ENCODE measurements at regions of chr18 and their contacts with region 1.

Region 1: DNA sequence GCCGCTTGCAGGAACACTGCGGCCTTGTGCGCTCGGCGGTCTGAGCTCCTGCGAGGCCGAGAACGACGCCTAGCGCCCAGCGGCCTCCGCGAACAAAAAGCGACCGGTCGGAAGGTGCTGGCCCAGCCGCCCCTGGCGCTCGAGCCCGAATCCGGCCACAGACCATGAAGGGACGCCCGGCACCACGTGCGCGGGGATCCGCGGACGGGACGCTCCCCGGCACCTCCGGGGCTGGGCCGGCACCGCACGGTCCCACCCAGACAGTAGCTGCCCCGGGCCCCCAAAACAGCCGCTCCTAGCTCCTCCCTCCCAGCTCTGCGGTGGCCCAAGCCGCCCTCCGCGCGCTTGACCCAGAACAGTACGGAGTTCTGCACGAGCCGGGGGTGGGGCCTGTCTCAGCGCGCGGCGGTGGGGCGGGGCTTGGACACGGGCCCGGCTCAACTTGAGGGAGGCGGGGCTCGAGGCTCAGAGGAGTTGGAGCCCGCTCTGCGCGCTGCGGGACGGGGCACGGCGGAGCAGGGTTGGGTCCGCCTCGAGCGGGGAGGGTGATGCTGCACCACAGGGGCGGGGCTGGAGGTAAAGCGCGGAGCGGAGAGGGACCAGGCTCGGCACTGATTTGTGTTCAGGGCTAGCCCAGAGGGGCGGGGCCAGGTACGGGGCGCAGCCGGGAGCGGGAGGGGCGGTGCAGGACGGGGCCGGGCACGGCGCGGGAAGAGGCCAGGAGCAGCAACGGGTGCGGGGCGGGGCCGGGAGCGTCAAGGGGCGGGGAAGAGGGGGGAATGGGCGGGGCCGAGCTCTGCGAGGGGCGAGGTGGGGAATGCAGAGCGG is 538 bp upstream of the IMPA2 start:
- DNase-seq: peak; percentile 99
- ATAC-seq: peak; percentile 95
- H3K4me3 Mint-ChIP-seq: peak overlapping the region; percentile 91
- H3K27ac Mint-ChIP-seq: peak overlapping the region; percentile 82
- H3K4me1 Mint-ChIP-seq: peaks cover 16% of the 10 kb centered on the region
- H3K27me3 Mint-ChIP-seq: peaks cover 4% of the 10 kb centered on the region

Region 2: GRCh38 chr18:11851146-11851805 is 129.5 kb before region 1 on chr18 and contains the start of gene CHMP1B:
- CTCF ChIA-PET with region 1: interaction called, 3 read pairs
- POLR2A ChIA-PET with region 1: interaction called, 3 read pairs
- intact Hi-C with region 1: loop called (anchors 1 kb)
- DNase-seq: peak; percentile 98
- ATAC-seq: peak; percentile 92
- H3K4me3 Mint-ChIP-seq: peak within 1 kb of the TSS; percentile 91
- H3K27ac Mint-ChIP-seq: peak within 1 kb of the TSS; percentile 99
- H3K4me1 Mint-ChIP-seq: peaks cover 25% of the 10 kb centered on the region
- H3K27me3 Mint-ChIP-seq: no peaks in the 10 kb centered on the region
- total RNA-seq, gene CHMP1B: 20.4 to 20.9 TPM

Region 3: GRCh38 chr18:11937874-11938478 is 42.8 kb before region 1 on chr18:
- CTCF ChIA-PET with region 1: interaction called, 33 read pairs
- POLR2A ChIA-PET with region 1: no interaction called
- intact Hi-C with region 1: no loop called
- DNase-seq: peak; percentile 86
- ATAC-seq: peak; percentile 51
- H3K4me3 Mint-ChIP-seq: no peak overlapping the region
- H3K27ac Mint-ChIP-seq: no peak overlapping the region
- H3K4me1 Mint-ChIP-seq: no peaks in the 10 kb centered on the region
- H3K27me3 Mint-ChIP-seq: no peaks in the 10 kb centered on the region

Region 4: GRCh38 chr18:11995445-11996189 is 14.8 kb after region 1 on chr18:
- CTCF ChIA-PET with region 1: interaction called, 25 read pairs
- POLR2A ChIA-PET with region 1: interaction called, 7 read pairs
- intact Hi-C with region 1: no loop called
- DNase-seq: peak; percentile 75
- ATAC-seq: peak; percentile 97
- H3K4me3 Mint-ChIP-seq: no peak overlapping the region
- H3K27ac Mint-ChIP-seq: no peak overlapping the region
- H3K4me1 Mint-ChIP-seq: peaks cover 7% of the 10 kb centered on the region
- H3K27me3 Mint-ChIP-seq: no peaks in the 10 kb centered on the region

Region 5: GRCh38 chr18:12657684-12658425 is 677.1 kb after region 1 on chr18 and contains the start of gene SPIRE1:
- CTCF ChIA-PET with region 1: no interaction called
- POLR2A ChIA-PET with region 1: no interaction called
- intact Hi-C with region 1: loop called in 1 of 2 experiments (anchors 10 kb)
- DNase-seq: peak; percentile 61
- ATAC-seq: peak; percentile 57
- H3K4me3 Mint-ChIP-seq: peak within 1 kb of the TSS; percentile 71
- H3K27ac Mint-ChIP-seq: no peak within 1 kb of the TSS
- H3K4me1 Mint-ChIP-seq: peaks cover 17% of the 10 kb centered on the region
- H3K27me3 Mint-ChIP-seq: peaks cover 20% of the 10 kb centered on the region
- total RNA-seq, gene SPIRE1: 3.0 to 3.8 TPM